ENCODE measurements at regions of chr16 and their contacts with region 1.

Region 1: GRCh38 chr16:17578921-17579874 is 108.4 kb upstream of the XYLT1 start:
- DNase-seq: peak; percentile 82
- H3K4me3 Mint-ChIP-seq: no peak overlapping the region
- H3K27ac Mint-ChIP-seq: no peak overlapping the region
- H3K4me1 Mint-ChIP-seq: peaks cover 12% of the 10 kb centered on the region
- H3K27me3 Mint-ChIP-seq: peaks cover 13% of the 10 kb centered on the region
- CTCF ChIP-seq: peak; percentile 84

Region 2: DNA sequence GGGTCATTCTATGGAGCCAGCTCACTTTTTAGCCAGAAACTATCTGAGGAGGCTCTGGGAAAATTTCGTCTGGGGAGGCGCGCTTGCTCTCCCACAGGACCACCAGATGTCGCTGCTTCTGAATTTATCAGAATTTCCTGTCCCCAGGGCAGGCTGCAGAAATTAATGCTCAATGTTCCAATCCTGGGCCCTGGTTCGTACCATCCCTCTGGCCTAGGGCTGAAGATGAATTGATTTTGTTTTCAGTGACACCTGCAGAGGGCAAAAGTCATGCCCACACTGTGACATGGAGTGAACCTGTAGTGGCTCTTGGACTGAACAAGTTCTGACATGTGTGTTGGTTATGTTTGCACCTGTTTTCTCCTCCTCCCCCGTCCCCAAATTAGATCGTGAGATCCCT is 717.7 kb before region 1 on chr16:
- CTCF ChIA-PET with region 1: interaction called, 4 read pairs
- intact Hi-C with region 1: loop called (anchors 5 kb)
- DNase-seq: peak; percentile 59
- H3K4me3 Mint-ChIP-seq: no peak overlapping the region
- H3K27ac Mint-ChIP-seq: no peak overlapping the region
- H3K4me1 Mint-ChIP-seq: no peaks in the 10 kb centered on the region
- H3K27me3 Mint-ChIP-seq: peaks cover 13% of the 10 kb centered on the region
- CTCF ChIP-seq: peak; percentile 62

Region 3: GRCh38 chr16:16992975-16993765 is 586.0 kb before region 1 on chr16:
- CTCF ChIA-PET with region 1: interaction called, 11 read pairs
- intact Hi-C with region 1: no loop called
- DNase-seq: no peak
- H3K4me3 Mint-ChIP-seq: no peak overlapping the region
- H3K27ac Mint-ChIP-seq: no peak overlapping the region
- H3K4me1 Mint-ChIP-seq: no peaks in the 10 kb centered on the region
- H3K27me3 Mint-ChIP-seq: no peaks in the 10 kb centered on the region
- CTCF ChIP-seq: no peak

Region 4: DNA sequence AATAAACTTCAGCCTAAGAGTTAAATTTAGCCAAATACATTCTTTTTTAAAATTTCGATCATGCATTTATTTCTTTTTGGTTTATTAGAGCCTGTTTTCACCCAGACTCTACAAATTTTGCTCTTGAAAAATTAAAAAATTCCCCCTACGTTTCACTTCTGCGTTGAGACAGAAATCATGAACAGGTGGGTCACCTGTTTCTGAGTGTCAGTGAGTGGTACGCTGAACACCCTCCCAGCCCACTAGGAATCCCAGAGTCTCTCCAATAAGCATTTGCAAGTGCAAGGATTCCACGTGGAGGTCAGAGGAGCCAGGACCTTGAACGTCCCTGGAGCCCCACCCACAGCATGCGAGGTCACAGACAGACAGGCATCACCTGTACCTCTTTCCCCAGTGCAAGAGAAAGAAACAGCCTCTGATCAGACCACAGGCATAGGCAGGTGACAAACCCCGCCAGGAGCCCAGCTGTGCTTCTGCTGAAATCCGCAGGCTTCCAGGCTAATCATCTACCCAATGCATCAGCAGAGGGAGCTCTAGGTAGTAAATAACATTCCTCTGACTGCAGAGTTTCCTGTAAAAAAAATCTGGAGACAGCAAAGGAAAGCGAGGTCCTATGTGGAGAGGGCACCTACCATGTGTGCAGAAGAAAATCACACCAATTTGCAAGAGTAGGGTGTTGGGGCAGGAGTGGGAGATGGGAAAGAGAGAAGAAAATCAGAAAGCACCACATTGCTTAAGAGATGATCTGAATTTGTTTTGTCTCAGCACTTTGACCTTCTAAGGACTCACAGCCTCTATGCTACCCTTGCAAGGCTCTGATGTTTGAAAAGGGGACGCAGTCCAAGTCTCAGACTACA is 102.6 kb before region 1 on chr16:
- CTCF ChIA-PET with region 1: interaction called, 6 read pairs
- intact Hi-C with region 1: loop called (anchors 5 kb)
- DNase-seq: peak; percentile 65
- H3K4me3 Mint-ChIP-seq: no peak overlapping the region
- H3K27ac Mint-ChIP-seq: no peak overlapping the region
- H3K4me1 Mint-ChIP-seq: no peaks in the 10 kb centered on the region
- H3K27me3 Mint-ChIP-seq: peaks cover 68% of the 10 kb centered on the region
- CTCF ChIP-seq: peak; percentile 9

Region 5: GRCh38 chr16:17543073-17543472 is 36.1 kb before region 1 on chr16:
- CTCF ChIA-PET with region 1: no interaction called
- intact Hi-C with region 1: no loop called
- DNase-seq: no peak
- H3K4me3 Mint-ChIP-seq: no peak overlapping the region
- H3K27ac Mint-ChIP-seq: no peak overlapping the region
- H3K4me1 Mint-ChIP-seq: no peaks in the 10 kb centered on the region
- H3K27me3 Mint-ChIP-seq: peaks cover 18% of the 10 kb centered on the region
- CTCF ChIP-seq: no peak

Region 6: GRCh38 chr16:17556276-17557052 is 22.7 kb before region 1 on chr16:
- CTCF ChIA-PET with region 1: interaction called, 16 read pairs
- intact Hi-C with region 1: no loop called
- DNase-seq: no peak
- H3K4me3 Mint-ChIP-seq: no peak overlapping the region
- H3K27ac Mint-ChIP-seq: no peak overlapping the region
- H3K4me1 Mint-ChIP-seq: no peaks in the 10 kb centered on the region
- H3K27me3 Mint-ChIP-seq: no peaks in the 10 kb centered on the region
- CTCF ChIP-seq: peak; percentile 64

Measured in Calu3 (cell line).